Psoas muscle (tissue), 8 donors: ENCODE measurements at regions of chr11 and their contacts with region 1.

Region 1: DNA sequence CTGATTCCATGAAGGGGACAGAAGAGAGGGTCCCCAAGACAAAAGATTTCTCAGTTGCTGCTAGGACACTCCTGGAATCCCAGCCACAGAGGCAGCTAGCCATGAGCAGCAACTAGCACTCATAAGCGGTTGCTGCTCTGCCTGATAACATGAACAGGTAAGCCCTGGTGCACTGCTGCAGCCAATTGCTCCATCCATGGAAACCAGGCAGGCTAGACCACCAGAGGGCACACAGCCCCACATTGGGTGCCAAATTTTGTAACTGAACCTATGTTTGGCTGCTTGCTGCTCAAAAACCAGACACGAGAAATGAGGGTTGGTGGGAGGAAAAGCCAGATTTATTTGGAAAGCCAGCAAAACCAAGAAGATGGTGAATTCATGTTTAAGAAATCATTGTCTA is 21.9 kb upstream of the QSER1 start:
- DNase-seq: no peak
- ATAC-seq: peak in 1 of 4 donors; percentile 53
- H3K4me3 ChIP-seq: no peak overlapping the region
- H3K27ac ChIP-seq: no peak overlapping the region
- H3K4me1 ChIP-seq: no peaks in the 10 kb centered on the region
- H3K27me3 ChIP-seq: peaks cover 0 to 1% (median 0%) of the 10 kb centered on the region in 3 donors
- CTCF ChIP-seq: peak; percentile 31

Region 2: GRCh38 chr11:32809313-32809712 is 61.4 kb before region 1 on chr11:
- intact Hi-C with region 1: loop called in 1 of 2 experiments (anchors 2 kb)
- DNase-seq: peak in 1 of 2 donors; percentile 38
- ATAC-seq: peak in 2 of 4 donors; percentile 59 to 68
- H3K4me3 ChIP-seq: no peak overlapping the region
- H3K27ac ChIP-seq: no peak overlapping the region
- H3K4me1 ChIP-seq: no peaks in the 10 kb centered on the region
- H3K27me3 ChIP-seq: no peaks in the 10 kb centered on the region
- CTCF ChIP-seq: peak; percentile 45